AG04450 (cell line): ENCODE measurements at regions of chr12 and their contacts with region 1.

Region 1: GRCh38 chr12:27523642-27524493 is at the start of gene PPFIBP1:
- DNase-seq: peak; percentile 94
- H3K4me3 ChIP-seq: peak within 1 kb of the TSS; percentile 84
- H3K27ac ChIP-seq: peak within 1 kb of the TSS; percentile 83
- H3K27me3 ChIP-seq: no peaks in the 10 kb centered on the region
- CTCF ChIP-seq: peak; percentile 37
- polyA plus RNA-seq, gene PPFIBP1: 42.5 and 58.3 TPM in 2 replicates

Region 2: DNA sequence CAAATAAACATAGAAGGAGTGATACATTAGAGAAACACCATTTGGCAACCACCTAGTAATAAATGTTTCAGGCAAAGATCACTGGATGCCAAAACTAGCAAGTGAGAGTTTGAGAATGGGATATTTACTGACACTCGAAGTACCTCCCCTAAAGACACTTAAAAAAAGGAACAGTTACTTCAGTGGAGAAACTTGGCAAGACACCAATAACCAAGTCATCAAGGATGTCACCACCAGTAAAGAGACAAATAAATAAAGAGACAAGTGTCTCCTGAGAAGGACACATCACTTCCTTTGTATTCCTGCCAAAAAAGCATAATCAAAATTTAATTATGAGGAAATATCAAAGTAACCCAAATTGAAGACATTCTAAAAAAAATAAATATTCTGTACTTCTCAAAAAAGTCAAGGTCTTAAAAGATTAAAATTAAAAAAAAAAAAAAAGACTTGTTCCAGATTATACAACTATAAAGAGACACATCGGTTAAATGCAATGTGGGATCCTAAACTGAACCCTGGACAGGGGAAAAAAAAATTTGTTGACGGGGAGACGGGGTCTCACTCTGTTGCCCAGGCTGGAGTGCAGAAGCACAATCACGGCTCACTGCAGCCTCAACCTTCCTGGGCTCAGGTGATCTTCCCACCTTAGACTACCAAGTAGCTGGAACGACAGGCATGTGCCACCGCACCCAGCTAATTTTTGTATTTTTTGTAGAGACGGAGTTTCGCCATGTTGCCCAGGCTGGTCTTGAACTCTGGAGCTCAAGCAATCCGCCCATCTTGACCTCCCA is 536.0 kb before region 1 on chr12:
- CTCF ChIA-PET with region 1: no interaction called
- POLR2A ChIA-PET with region 1: no interaction called
- DNase-seq: no peak
- H3K4me3 ChIP-seq: no peak overlapping the region
- H3K27ac ChIP-seq: no peak overlapping the region
- H3K27me3 ChIP-seq: no peaks in the 10 kb centered on the region
- CTCF ChIP-seq: no peak

Region 3: DNA sequence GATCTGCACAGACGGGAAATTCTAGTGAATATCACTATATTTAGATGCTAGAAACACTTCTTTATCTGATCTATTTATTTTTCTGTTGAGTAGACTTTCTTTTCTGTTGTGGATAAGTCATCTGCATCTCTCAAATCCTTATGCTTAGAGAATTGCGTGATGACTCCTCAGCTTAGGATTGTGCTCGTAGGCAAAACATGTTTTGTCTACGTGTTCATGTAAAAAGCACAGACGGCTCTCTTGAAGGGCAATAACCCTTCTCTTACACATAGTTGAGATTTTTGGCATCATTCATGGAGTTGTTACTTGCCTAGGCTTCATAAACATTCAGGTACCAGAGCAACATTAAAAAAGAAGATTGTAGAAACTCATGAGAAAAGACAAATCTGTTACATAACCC is 18.8 kb after region 1 on chr12:
- CTCF ChIA-PET with region 1: interaction called, 10 read pairs
- POLR2A ChIA-PET with region 1: interaction called, 13 read pairs
- DNase-seq: peak; percentile 87
- H3K4me3 ChIP-seq: no peak overlapping the region
- H3K27ac ChIP-seq: no peak overlapping the region
- H3K27me3 ChIP-seq: no peaks in the 10 kb centered on the region
- CTCF ChIP-seq: no peak

Region 4: DNA sequence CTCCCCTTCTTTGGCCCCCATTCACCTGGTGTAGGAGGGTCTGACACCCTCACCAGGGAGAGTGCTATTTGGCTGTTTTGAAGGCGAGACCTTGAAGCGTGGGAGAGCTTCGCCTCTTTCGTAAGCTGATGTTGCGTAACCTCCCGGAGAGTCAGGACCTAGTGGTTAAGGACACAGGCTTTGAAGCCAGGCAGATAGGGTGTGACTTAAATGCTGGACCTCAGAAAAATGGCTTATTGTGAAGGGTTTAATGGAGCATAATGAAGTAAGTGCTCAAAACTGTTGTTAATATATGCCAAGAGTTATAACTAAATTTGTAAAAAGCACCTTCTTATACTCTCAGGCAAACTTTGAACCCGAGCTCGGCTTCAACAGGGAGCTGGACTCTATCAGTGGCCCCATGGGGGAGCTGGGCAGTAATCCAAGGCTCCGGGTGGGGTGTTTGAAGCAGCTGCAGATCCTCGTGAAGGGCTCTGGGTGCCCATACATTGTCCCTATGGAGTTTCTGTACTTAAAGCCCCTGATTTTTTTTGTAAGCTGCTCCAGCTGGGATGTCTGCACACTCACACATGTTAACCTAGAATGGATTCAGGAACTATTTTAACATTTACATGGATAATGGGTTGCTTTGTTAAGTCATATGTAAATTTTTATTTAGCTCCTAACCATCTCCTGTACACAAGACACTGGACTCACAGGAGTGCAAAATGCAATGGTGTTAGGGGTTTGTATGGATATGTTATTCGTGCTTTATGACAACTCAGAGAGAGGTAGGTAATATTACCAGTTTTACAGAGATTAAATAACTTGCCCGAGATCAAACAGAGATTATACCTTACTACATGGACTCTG is 26.2 kb after region 1 on chr12:
- CTCF ChIA-PET with region 1: no interaction called
- POLR2A ChIA-PET with region 1: interaction called, 11 read pairs
- DNase-seq: peak; percentile 73
- H3K4me3 ChIP-seq: peak overlapping the region; percentile 14
- H3K27ac ChIP-seq: peak overlapping the region; percentile 86
- H3K27me3 ChIP-seq: no peaks in the 10 kb centered on the region
- CTCF ChIP-seq: no peak

Region 5: GRCh38 chr12:27899151-27899661 is 375.3 kb after region 1 on chr12:
- CTCF ChIA-PET with region 1: no interaction called
- POLR2A ChIA-PET with region 1: no interaction called
- DNase-seq: peak; percentile 98
- H3K4me3 ChIP-seq: no peak overlapping the region
- H3K27ac ChIP-seq: peak overlapping the region; percentile 91
- H3K27me3 ChIP-seq: no peaks in the 10 kb centered on the region
- CTCF ChIP-seq: no peak